MCF 10A (cell line): ENCODE measurements at regions of chr1 and their contacts with region 1.

Region 1: DNA sequence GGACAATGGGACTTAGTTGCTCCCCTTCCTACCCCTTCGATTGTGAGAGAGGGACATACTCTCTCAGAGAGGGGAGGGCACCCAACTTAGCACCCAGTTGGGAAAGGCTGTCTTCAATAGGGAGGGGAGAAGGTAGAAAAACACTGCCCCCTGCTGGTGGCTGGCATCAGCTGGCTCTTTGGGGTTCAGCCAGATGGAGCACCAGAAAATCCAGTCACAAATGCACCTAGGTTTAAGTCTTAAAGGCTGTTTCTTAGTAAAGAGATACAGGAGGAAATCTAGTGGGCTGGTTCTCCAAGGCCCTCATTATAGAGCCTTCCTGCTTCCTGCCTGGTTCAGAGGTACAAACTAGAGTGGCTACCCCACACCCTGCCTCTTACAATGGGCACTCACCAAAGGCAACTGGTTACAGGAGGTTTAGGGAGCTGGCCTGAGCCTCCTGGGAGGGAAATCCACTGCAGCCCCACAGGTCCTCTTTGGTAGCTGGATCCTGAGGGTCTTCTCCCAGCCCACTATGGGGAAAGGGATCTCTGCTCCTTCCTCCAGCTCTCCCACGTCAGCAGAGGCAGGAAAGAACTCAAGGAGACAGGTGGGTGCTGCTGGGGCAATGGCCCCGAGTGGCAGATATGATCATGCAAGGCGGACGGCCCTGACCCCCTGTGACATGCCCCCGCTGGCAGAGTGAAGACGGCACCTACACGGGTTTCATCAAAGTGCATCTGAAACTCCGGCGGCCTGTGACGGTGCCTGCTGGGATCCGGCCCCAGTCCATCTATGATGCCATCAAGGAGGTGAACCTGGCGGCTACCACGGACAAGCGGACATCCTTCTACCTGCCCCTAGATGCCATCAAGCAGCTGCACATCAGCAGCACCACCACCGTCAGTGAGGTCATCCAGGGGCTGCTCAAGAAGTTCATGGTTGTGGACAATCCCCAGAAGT is 28.3 kb downstream of the EIF2D start:
- DNase-seq: peak; percentile 90
- H3K4me3 Mint-ChIP-seq: no peak overlapping the region
- H3K27ac Mint-ChIP-seq: no peak overlapping the region
- H3K4me1 Mint-ChIP-seq: peaks cover 20% of the 10 kb centered on the region
- H3K27me3 Mint-ChIP-seq: no peaks in the 10 kb centered on the region
- CTCF ChIP-seq: peak; percentile 99

Region 2: DNA sequence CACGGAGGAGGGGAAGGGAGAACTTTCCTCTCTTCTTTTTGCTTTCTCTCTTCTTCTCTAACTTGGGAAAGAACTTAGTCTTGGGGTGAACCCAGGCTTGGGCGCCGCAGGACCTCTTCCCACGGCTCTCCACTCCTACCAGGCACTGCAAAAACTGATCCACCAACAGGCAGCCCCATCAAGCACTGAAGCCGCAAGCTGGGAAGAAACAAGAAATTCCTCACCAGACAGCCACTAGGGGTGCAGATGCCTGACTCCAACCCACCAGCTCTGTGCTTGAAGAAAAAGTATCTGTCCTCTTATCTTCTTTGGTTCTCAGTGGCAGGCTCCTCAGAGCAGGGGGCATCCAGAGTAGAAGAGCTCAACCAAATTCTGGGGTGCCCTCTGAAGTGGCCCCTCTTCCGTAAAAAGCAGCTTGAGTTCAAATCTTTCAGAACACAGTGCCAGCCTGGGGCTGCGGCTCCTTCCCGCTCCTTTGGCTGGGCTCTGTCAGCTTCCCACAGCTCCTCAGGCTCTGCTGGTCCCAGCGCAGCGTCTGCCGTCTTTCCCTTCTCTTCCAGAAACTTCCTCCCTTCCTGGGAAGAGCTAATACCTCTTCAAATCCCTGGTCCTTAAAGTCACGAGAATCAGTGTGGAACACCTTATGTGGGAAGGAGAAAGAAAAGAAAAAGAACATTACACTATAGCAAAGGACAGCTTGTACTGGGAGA is 773.4 kb before region 1 on chr1:
- CTCF ChIA-PET with region 1: no interaction called
- POLR2A ChIA-PET with region 1: no interaction called
- intact Hi-C with region 1: no loop called
- DNase-seq: no peak
- H3K4me3 Mint-ChIP-seq: no peak overlapping the region
- H3K27ac Mint-ChIP-seq: no peak overlapping the region
- H3K4me1 Mint-ChIP-seq: peaks cover 50% of the 10 kb centered on the region
- H3K27me3 Mint-ChIP-seq: no peaks in the 10 kb centered on the region
- CTCF ChIP-seq: peak; percentile 12

Region 3: DNA sequence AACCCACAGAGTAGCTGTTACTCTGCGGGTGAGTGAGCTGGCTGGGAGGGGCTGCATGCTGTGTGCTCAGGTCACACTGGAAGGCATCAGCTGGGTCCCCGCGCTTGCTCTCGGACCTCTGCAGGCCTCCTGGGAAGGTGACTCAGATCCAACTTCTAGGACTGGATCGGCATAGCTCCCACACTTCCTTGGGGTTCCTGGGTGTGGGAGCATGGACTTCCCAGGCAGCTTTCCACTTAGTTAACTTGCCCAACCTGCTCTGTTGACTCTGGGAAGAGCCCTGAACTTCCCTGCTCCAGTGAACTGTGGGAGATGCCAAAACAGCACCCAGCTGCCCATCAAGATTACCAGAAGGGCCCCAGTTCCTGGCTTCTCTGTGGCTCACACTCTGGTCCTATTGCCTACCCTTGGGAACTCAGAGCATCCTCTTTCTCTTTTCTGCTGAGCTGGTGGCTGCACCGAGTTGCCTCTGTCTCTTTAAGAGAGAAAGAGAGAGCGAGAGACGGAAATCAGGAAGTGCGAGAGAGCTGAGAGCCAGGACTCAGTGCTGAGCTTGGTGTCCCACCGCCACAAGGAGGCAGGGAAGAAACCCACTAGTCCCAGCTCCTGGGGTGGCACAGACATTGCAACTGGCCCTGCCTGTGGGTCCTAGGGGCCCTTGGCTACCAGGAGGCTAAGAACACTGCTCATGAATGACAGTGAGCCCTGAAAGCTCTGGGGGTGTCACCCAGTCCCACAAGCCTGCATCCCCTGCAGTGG is 113.9 kb before region 1 on chr1 and contains the start of gene IKBKE:
- CTCF ChIA-PET with region 1: interaction called, 32 read pairs
- POLR2A ChIA-PET with region 1: interaction called, 4 read pairs
- intact Hi-C with region 1: no loop called
- DNase-seq: peak; percentile 85
- H3K4me3 Mint-ChIP-seq: peak within 1 kb of the TSS; percentile 75
- H3K27ac Mint-ChIP-seq: peak within 1 kb of the TSS; percentile 61
- H3K4me1 Mint-ChIP-seq: peaks cover 43% of the 10 kb centered on the region
- H3K27me3 Mint-ChIP-seq: peaks cover 13% of the 10 kb centered on the region
- CTCF ChIP-seq: no peak
- total RNA-seq, gene IKBKE: 7.1 and 12.1 TPM in 2 replicates

Region 4: GRCh38 chr1:206489980-206490770 is 93.8 kb before region 1 on chr1:
- CTCF ChIA-PET with region 1: interaction called, 851 read pairs
- POLR2A ChIA-PET with region 1: interaction called, 25 read pairs
- intact Hi-C with region 1: loop called (anchors 1 kb)
- DNase-seq: peak; percentile 89
- H3K4me3 Mint-ChIP-seq: no peak overlapping the region
- H3K27ac Mint-ChIP-seq: no peak overlapping the region
- H3K4me1 Mint-ChIP-seq: no peaks in the 10 kb centered on the region
- H3K27me3 Mint-ChIP-seq: no peaks in the 10 kb centered on the region
- CTCF ChIP-seq: peak; percentile 100

Region 5: DNA sequence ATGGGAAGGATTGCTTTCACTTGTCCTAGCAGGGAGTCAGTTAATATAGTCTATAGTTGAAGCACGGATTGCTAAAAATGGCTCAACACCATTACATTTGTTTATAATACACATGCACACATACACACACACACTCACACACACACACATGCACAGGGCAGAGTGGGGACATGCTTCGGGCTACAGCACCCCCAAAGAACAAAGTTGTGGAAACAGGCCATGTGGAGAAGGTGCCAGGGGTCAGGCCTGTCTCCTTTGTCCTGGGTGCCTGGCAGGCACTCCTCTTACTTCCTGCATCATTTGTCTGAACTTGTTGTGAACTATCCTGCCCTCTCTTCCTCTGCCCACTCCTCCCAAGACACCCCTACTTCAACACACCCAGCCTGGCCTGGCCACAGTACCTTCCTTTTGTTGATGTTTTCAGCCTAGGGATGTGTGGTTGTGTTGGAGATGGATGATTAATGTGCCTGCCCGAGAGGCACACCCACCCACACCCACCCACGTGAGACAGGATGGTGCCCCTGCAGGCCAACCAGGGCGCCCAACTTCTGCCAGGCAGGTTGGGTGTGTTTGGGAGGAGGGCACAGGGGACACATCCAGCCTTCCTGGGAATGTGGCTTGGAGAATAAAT is 59.1 kb before region 1 on chr1:
- CTCF ChIA-PET with region 1: interaction called, 13 read pairs
- POLR2A ChIA-PET with region 1: no interaction called
- intact Hi-C with region 1: no loop called
- DNase-seq: peak; percentile 93
- H3K4me3 Mint-ChIP-seq: no peak overlapping the region
- H3K27ac Mint-ChIP-seq: peak overlapping the region; percentile 85
- H3K4me1 Mint-ChIP-seq: peaks cover 18% of the 10 kb centered on the region
- H3K27me3 Mint-ChIP-seq: no peaks in the 10 kb centered on the region
- CTCF ChIP-seq: no peak

Region 6: DNA sequence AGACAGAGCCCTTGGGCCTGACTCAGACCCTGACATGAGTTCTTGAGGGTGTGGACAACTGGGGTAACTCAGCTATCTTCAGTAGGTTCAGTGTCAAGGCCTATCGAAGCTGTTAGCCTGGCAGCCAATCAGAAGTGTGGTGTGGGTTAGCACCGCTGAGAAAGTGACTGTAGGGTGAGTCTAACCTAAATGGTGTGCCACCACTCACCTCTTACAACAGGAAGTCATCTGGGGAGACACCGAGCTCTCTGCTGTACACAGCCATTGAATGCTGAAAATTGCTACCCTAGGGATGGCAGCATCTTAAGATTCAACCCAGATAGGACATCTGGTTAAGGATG is 32.0 kb before region 1 on chr1:
- CTCF ChIA-PET with region 1: interaction called, 277 read pairs
- POLR2A ChIA-PET with region 1: interaction called, 3 read pairs
- intact Hi-C with region 1: no loop called
- DNase-seq: no peak
- H3K4me3 Mint-ChIP-seq: no peak overlapping the region
- H3K27ac Mint-ChIP-seq: no peak overlapping the region
- H3K4me1 Mint-ChIP-seq: no peaks in the 10 kb centered on the region
- H3K27me3 Mint-ChIP-seq: no peaks in the 10 kb centered on the region
- CTCF ChIP-seq: no peak

Region 7: GRCh38 chr1:206600527-206600926 is 16.5 kb after region 1 on chr1:
- CTCF ChIA-PET with region 1: interaction called, 61 read pairs
- POLR2A ChIA-PET with region 1: interaction called, 6 read pairs
- intact Hi-C with region 1: no loop called
- DNase-seq: no peak
- H3K4me3 Mint-ChIP-seq: no peak overlapping the region
- H3K27ac Mint-ChIP-seq: no peak overlapping the region
- H3K4me1 Mint-ChIP-seq: no peaks in the 10 kb centered on the region
- H3K27me3 Mint-ChIP-seq: no peaks in the 10 kb centered on the region
- CTCF ChIP-seq: no peak